ENCODE measurements at regions of chr22 and their contacts with region 1.

Region 1: DNA sequence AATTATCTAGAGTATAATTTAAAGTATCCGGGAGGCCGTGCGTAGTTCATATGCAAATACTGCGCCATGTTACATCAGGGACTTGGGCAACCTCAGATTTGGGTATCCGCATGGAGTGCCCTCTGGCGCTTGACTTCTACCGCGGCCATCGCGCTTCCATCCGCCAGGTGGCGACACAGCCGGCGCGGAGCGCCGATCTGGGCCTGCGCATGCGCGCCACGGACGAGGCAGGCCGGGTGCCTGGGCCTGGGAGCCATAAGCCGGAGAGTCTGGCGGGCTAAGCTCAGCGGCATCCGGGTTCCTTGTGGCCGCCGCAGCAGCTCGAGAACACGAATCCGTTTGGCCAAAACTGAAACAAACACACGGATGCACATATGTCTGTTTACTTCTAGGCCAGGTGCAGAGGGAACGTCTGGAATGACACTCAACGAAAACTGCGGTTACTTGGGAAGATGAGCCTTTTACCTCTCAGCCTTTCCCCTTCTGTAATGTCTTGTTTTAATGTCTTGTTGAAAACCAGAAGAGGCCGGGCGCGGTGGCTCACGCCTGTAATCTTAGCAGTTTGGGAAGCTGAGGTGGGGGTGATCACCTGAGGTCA is 21.9 kb downstream of the SNU13 start:
- DNase-seq: peak; percentile 96
- ATAC-seq: peak; percentile 97
- H3K4me3 Mint-ChIP-seq: peak overlapping the region; percentile 85
- H3K27ac Mint-ChIP-seq: peak overlapping the region; percentile 97
- H3K4me1 Mint-ChIP-seq: peaks cover 10% of the 10 kb centered on the region
- H3K27me3 Mint-ChIP-seq: no peaks in the 10 kb centered on the region

Region 2: GRCh38 chr22:41589391-41590241 is 77.1 kb before region 1 on chr22 and contains the start of gene PMM1:
- CTCF ChIA-PET with region 1: interaction called, 10 read pairs
- DNase-seq: peak; percentile 100
- ATAC-seq: peak; percentile 97
- H3K4me3 Mint-ChIP-seq: peak within 1 kb of the TSS; percentile 99
- H3K27ac Mint-ChIP-seq: peak within 1 kb of the TSS; percentile 96
- H3K4me1 Mint-ChIP-seq: peaks cover 20% of the 10 kb centered on the region
- H3K27me3 Mint-ChIP-seq: no peaks in the 10 kb centered on the region
- total RNA-seq, gene PMM1: 40.4 to 50.0 TPM

Region 3: DNA sequence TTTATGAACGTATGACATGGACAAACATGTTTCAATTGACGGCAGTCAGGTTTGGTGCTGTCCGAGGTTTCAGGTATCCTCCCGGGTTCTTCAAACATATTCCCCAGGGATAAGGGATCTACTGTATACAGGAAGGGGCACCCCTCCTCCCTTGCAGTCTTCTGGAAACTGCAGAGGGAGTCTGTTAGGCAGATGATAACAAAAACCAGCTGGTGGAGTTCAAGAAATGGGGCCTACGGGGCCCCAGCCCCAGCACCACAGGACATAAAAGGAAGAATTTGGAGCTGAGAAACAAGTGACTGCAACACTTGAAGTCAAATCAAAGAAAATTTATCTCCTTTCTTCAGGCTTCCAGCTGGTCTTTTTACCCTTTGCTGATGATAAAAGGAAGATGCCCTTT is 10.2 kb before region 1 on chr22:
- CTCF ChIA-PET with region 1: interaction called, 44 read pairs
- DNase-seq: no peak
- ATAC-seq: no peak
- H3K4me3 Mint-ChIP-seq: no peak overlapping the region
- H3K27ac Mint-ChIP-seq: no peak overlapping the region
- H3K4me1 Mint-ChIP-seq: peaks cover 2% of the 10 kb centered on the region
- H3K27me3 Mint-ChIP-seq: no peaks in the 10 kb centered on the region

Region 4: GRCh38 chr22:41688365-41689211 is 21.8 kb after region 1 on chr22 and contains the start of gene SNU13:
- CTCF ChIA-PET with region 1: interaction called, 57 read pairs
- DNase-seq: peak; percentile 96
- ATAC-seq: peak; percentile 93
- H3K4me3 Mint-ChIP-seq: peak within 1 kb of the TSS; percentile 96
- H3K27ac Mint-ChIP-seq: peak within 1 kb of the TSS; percentile 98
- H3K4me1 Mint-ChIP-seq: peaks cover 33% of the 10 kb centered on the region
- H3K27me3 Mint-ChIP-seq: no peaks in the 10 kb centered on the region
- total RNA-seq, gene SNU13: 176 to 193 TPM

Region 5: GRCh38 chr22:41780746-41781505 is 114.2 kb after region 1 on chr22:
- CTCF ChIA-PET with region 1: interaction called, 14 read pairs
- DNase-seq: peak; percentile 98
- ATAC-seq: peak; percentile 97
- H3K4me3 Mint-ChIP-seq: peak overlapping the region; percentile 76
- H3K27ac Mint-ChIP-seq: peak overlapping the region; percentile 99
- H3K4me1 Mint-ChIP-seq: peaks cover 41% of the 10 kb centered on the region
- H3K27me3 Mint-ChIP-seq: no peaks in the 10 kb centered on the region

Region 6: DNA sequence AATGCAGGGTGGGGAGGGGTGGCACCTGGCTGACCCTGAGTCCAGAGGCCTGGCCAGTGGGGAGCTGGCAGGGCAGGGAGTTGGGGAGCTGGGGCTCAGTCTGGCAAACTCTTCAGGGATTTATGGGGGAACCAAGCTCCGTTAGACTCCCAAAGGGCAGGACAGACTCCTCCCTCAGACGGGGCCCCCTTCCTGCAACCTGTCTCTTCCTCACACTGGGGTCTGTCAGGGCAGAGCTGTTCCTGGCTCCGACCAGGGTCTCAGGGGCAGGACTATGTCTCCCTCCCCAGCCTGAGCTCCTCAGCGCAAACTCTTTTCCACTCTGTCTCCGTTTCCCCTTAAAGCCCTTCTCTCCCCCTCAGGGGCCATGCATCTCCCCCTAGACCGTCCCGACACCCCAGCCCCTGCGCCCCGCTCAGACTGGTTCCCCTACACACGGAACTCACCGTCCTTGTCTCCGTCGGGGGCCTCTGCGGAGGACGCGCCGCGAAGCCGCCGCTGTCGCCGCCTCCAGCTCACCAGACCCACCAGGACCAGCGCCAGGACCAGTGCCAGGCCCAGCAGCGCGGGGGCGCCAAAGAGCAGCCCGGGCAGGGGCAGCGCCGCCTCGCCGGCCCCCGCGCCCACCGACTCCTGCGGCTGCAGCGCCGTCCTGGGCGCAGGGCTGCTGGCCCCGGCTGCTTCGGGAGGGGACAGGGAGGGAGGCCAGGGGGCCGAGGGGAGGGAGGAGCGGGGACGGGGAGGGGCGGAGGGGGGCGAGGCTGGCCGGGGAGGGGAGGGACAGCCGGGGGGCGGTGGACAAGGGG is 259.1 kb after region 1 on chr22:
- CTCF ChIA-PET with region 1: interaction called, 10 read pairs
- DNase-seq: peak; percentile 82
- ATAC-seq: peak; percentile 89
- H3K4me3 Mint-ChIP-seq: peak overlapping the region; percentile 57
- H3K27ac Mint-ChIP-seq: no peak overlapping the region
- H3K4me1 Mint-ChIP-seq: peaks cover 7% of the 10 kb centered on the region
- H3K27me3 Mint-ChIP-seq: peaks cover 16% of the 10 kb centered on the region

Region 7: GRCh38 chr22:41946629-41947423 is 280.1 kb after region 1 on chr22 and contains the start of gene CENPM:
- CTCF ChIA-PET with region 1: interaction called, 10 read pairs
- DNase-seq: peak; percentile 97
- ATAC-seq: peak; percentile 97
- H3K4me3 Mint-ChIP-seq: peak within 1 kb of the TSS; percentile 93
- H3K27ac Mint-ChIP-seq: peak within 1 kb of the TSS; percentile 92
- H3K4me1 Mint-ChIP-seq: peaks cover 44% of the 10 kb centered on the region
- H3K27me3 Mint-ChIP-seq: no peaks in the 10 kb centered on the region
- total RNA-seq, gene CENPM: 74.0 to 95.8 TPM